Activated CD4-positive, alpha-beta T cell treated with anti-CD3 and anti-CD28 coated beads for 36 hours (primary cell): ENCODE measurements at regions of chr1 and their contacts with region 1.

Region 1: DNA sequence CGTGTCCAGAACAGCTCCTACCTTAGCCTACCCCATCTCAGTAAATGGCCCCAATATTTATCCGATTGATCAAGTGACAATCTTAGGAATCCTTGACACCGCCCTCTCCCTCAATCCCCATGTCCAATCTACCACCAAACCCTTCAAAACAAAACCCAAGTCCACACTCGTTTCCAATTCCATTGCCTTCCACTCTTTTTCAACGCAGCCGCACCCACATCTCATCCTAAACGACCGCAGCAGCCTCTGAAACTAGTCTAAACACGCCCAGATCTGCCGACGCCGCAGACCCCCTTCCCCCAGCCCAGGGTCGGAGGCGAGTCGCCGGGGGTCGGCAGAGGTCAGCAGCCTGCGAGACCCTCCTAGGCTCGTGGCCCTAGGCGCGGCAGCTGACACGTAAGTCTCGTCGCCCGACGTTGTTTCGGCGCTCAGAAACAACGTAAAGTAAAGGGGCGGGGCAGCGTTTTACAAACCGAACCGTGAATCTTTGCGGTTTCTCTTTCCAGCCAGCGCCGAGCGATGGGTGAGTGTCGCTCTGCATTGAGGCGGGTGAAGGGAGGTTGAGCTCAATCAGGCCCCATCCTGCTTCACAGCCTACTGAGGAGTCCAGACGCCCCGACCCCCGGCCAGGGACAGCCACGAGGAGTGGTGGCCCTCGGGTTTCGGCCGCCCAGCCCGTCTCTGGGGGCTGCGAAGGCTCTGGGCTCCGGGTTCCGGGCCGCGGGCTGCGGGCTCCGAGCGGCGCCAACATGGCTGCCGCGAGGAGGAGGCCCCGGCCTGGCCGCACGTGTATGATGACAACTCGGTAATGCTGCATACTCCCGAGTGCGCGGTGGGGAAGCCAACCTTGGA is at the start of gene RPS8:
- DNase-seq: peak; percentile 94
- ATAC-seq: peak; percentile 84
- H3K4me3 Mint-ChIP-seq: peak within 1 kb of the TSS; percentile 96
- H3K27ac Mint-ChIP-seq: peak within 1 kb of the TSS; percentile 100
- H3K4me1 Mint-ChIP-seq: peaks cover 33% of the 10 kb centered on the region
- H3K27me3 Mint-ChIP-seq: no peaks in the 10 kb centered on the region
- total RNA-seq, gene RPS8: 3,005 to 3,275 TPM

Region 2: GRCh38 chr1:44144962-44145756 is 630.1 kb before region 1 on chr1:
- CTCF ChIA-PET with region 1: no interaction called
- POLR2A ChIA-PET with region 1: no interaction called
- intact Hi-C with region 1: no loop called
- DNase-seq: no peak
- ATAC-seq: no peak
- H3K4me3 Mint-ChIP-seq: no peak overlapping the region
- H3K27ac Mint-ChIP-seq: no peak overlapping the region
- H3K4me1 Mint-ChIP-seq: no peaks in the 10 kb centered on the region
- H3K27me3 Mint-ChIP-seq: peaks cover 4% of the 10 kb centered on the region

Region 3: DNA sequence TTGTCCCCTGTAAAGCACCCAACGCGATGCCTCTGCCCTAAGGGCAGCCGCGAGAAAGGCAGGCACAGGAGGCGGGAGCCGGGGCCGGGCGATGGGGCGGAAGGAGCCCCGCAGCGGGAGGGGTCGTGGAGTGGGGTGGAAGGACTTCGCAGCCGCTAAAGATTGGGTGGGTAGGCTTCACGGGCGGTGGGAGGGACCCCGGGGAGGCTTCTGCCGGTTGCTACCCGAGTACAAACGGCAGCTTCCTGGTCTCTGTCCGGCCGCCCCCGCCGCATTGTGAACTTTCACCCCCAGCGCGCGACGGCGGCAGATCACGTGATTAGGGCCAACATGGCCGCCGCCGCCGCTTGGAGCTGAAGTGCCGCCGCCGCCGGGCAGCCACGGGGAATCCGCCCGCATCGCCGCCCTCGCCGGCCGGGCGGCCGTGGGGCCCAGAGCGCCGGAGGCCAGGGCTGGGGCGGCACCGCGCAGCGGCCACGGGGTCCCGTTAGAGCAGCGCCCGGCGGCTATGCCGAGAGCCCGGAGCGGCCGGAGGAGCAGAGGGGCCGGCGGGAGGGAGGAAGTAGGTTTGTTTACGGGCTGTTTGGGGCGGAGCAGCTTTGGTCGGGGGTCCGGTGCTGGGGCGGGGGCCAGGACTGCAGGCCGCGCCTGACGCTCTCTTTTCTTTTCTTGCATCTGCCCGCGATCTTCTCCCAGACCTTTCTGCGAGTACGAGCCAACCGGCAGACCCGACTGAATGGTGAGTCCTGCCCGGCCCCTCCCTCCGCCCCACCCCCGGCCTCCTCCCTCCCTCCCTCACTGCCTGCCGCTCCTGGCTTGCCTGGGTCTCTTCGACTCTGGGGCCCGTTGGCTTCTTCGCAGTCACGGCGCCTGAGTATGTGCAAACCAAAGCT is 143.4 kb before region 1 on chr1:
- CTCF ChIA-PET with region 1: no interaction called
- POLR2A ChIA-PET with region 1: interaction called, 9 read pairs
- intact Hi-C with region 1: loop called in 1 of 2 experiments (anchors 1 kb)
- DNase-seq: peak; percentile 95
- ATAC-seq: peak; percentile 81
- H3K4me3 Mint-ChIP-seq: peak overlapping the region; percentile 86
- H3K27ac Mint-ChIP-seq: peak overlapping the region; percentile 97
- H3K4me1 Mint-ChIP-seq: peaks cover 40% of the 10 kb centered on the region
- H3K27me3 Mint-ChIP-seq: no peaks in the 10 kb centered on the region

Region 4: GRCh38 chr1:44739361-44740178 is 35.7 kb before region 1 on chr1 and contains the start of gene KIF2C:
- CTCF ChIA-PET with region 1: interaction called, 3 read pairs
- POLR2A ChIA-PET with region 1: interaction called, 4 read pairs
- intact Hi-C with region 1: loop called (anchors 1 kb)
- DNase-seq: peak; percentile 99
- ATAC-seq: peak; percentile 98
- H3K4me3 Mint-ChIP-seq: peak within 1 kb of the TSS; percentile 98
- H3K27ac Mint-ChIP-seq: peak within 1 kb of the TSS; percentile 94
- H3K4me1 Mint-ChIP-seq: peaks cover 26% of the 10 kb centered on the region
- H3K27me3 Mint-ChIP-seq: no peaks in the 10 kb centered on the region
- total RNA-seq, gene KIF2C: 101 to 119 TPM

Region 5: DNA sequence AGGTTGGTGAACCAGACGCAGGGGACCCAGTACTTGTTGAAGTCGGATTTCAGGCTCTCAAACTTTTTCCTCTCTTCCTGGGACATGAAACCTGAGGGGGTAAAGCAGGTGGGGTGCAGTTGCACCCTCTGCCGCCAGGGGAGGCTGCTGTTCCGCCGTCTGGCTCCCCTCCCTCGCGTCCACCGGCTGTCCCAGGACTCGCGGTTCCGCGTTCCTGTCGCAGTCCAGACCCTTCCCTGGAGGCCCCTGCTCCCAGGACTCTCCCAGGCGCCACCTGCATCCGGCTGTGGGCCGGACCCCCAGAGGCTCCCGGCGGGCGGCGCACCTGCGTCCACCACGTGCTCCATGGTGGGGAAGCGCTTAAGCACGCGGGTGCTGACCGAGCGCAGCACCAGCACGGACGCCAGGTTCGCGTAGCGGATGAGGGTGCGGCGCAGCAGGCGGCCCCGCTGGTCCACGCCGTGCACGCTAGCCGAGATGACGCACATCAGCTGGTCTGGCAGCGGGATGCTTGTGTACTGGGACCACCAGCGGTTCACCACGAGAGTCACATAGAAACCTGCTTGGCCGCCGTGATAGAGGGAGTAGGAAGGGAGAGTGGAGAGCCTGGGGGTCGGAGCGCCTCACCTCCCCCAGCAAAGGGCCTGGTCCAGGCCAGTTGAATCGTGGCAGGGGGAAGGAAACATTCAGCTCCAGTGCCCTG is 11.0 kb after region 1 on chr1:
- CTCF ChIA-PET with region 1: interaction called, 13 read pairs
- POLR2A ChIA-PET with region 1: interaction called, 15 read pairs
- intact Hi-C with region 1: loop called in 1 of 2 experiments (anchors 1 kb)
- DNase-seq: peak; percentile 85
- ATAC-seq: peak; percentile 73
- H3K4me3 Mint-ChIP-seq: peak overlapping the region; percentile 66
- H3K27ac Mint-ChIP-seq: peak overlapping the region; percentile 69
- H3K4me1 Mint-ChIP-seq: peaks cover 31% of the 10 kb centered on the region
- H3K27me3 Mint-ChIP-seq: no peaks in the 10 kb centered on the region

Region 6: DNA sequence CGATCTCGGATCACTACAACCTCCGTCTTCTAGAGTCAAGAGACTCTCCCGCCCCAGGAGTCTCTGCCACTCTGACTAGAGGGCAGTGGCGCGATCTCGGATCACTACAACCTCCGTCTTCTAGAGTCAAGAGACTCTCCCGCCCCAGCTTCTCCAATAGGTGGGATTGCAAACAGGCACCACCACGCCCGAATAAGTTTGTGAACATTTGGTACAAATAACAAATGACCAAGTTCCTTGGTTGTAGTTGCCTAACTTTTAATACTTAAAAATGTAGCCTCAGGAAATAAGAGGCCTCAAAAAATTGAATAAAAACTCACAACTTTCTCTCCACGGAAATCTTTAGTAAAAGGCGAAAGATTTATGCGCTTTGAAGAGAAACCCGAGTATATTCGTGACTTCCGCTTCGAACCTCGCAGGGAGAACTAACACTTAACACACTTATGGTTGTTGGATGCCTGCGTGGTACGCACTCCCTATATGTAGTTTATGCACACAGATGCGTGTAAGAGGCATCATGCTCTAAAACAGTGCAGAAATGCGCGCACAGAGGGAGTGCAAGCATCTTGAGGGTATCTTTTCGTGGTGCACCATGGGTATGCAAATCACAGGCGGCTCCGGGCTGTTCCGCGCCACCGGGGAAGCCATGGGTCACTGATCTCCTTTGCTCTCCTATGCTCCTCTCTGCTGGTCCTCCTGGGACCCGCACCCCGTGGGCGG is 44.5 kb after region 1 on chr1:
- CTCF ChIA-PET with region 1: interaction called, 4 read pairs
- POLR2A ChIA-PET with region 1: interaction called, 58 read pairs
- intact Hi-C with region 1: loop called (anchors 1 kb)
- DNase-seq: peak; percentile 88
- ATAC-seq: peak; percentile 88
- H3K4me3 Mint-ChIP-seq: peak overlapping the region; percentile 85
- H3K27ac Mint-ChIP-seq: peak overlapping the region; percentile 100
- H3K4me1 Mint-ChIP-seq: peaks cover 37% of the 10 kb centered on the region
- H3K27me3 Mint-ChIP-seq: no peaks in the 10 kb centered on the region